Right lobe of liver (tissue), 6 donors: ENCODE measurements at regions of chr3 and their contacts with region 1.

Region 1: GRCh38 chr3:127547761-127548605 is 42.5 kb downstream of the TPRA1 start:
- DNase-seq: peak; percentile 71 to 77 (median 74)
- ATAC-seq: peak; percentile 67 to 73 (median 71)
- H3K4me3 ChIP-seq: peak overlapping the region; percentile 50 to 60 (median 57)
- H3K27ac ChIP-seq: no peak overlapping the region
- H3K4me1 ChIP-seq: peaks cover 0 to 40% (median 16%) of the 10 kb centered on the region in 4 donors
- H3K27me3 ChIP-seq: no peaks in the 10 kb centered on the region
- CTCF ChIP-seq: peak; percentile 60 to 70 (median 64)
- POLR2A ChIP-seq: no peak

Region 2: GRCh38 chr3:126679318-126679751 is 868.6 kb before region 1 on chr3:
- intact Hi-C with region 1: loop called in 1 of 2 experiments (anchors 5 kb)
- DNase-seq: peak; percentile 75 to 86 (median 78)
- ATAC-seq: peak; percentile 92 to 97 (median 96)
- H3K4me3 ChIP-seq: no peak overlapping the region
- H3K27ac ChIP-seq: no peak overlapping the region
- H3K4me1 ChIP-seq: no peaks in the 10 kb centered on the region
- H3K27me3 ChIP-seq: no peaks in the 10 kb centered on the region
- CTCF ChIP-seq: peak; percentile 91 to 99 (median 96)
- POLR2A ChIP-seq: no peak

Region 3: DNA sequence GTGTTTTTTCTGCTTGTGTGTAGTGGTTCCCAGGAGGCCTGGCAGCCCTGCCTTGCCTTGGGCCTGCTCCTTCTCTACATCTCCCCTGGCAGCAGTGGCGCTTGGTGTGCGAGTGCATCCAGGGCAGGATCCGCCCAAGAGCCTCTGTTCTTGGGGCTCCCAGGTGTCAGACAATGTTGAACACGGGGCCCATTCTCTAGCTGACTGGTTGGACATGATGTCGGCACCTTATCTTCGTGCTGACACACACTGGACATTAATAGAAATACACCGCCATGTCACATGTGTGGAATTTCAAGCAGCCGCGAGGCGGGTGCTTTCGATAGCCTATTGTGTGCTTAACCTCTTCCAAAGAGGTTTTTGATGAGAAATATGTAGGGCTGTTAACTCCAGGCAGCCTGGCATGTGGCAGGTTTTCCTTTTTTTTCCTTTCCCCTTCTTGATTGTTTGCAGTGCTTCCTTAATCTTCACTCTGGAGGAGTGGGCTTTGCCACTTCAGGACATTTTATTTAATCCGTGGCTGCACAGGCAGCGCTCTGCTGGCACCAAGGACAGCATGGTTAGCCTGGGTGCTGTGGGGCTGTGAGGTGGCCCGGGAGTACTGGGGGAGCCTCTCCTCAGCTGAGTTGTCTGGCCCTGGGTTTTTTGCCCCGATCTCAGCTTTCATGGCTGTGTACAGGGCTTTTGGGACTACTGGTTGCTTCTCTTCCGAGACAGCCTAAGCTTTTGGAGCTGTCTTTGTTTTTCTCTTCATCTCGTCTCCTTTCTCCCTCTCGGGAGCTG is 801.4 kb before region 1 on chr3:
- intact Hi-C with region 1: loop called (anchors 5 to 10 kb)
- DNase-seq: peak in 1 of 3 donors; percentile 24
- ATAC-seq: no peak
- H3K4me3 ChIP-seq: no peak overlapping the region
- H3K27ac ChIP-seq: no peak overlapping the region
- H3K4me1 ChIP-seq: no peaks in the 10 kb centered on the region
- H3K27me3 ChIP-seq: no peaks in the 10 kb centered on the region
- CTCF ChIP-seq: no peak
- POLR2A ChIP-seq: no peak